CD8-positive, alpha-beta T cell (primary cell): ENCODE measurements at regions of chr19 and their contacts with region 1.

Region 1: GRCh38 chr19:15629003-15629880 is 11.5 kb upstream of the CYP4F3 start:
- DNase-seq: peak; percentile 81 to 98 (median 85)
- ATAC-seq: peak; percentile 93
- H3K4me3 ChIP-seq: no peak overlapping the region
- H3K4me3 Mint-ChIP-seq: no peak overlapping the region
- H3K27ac ChIP-seq: no peak overlapping the region
- H3K27ac Mint-ChIP-seq: no peak overlapping the region
- H3K4me1 ChIP-seq: peaks cover 5% of the 10 kb centered on the region
- H3K4me1 Mint-ChIP-seq: peaks cover 2% of the 10 kb centered on the region
- H3K27me3 ChIP-seq: no peaks in the 10 kb centered on the region
- H3K27me3 Mint-ChIP-seq: peaks cover 17% of the 10 kb centered on the region
- CTCF ChIP-seq: peak; percentile 91

Region 2: GRCh38 chr19:15869109-15869555 is 239.9 kb after region 1 on chr19:
- CTCF ChIA-PET with region 1: interaction called, 14 read pairs
- POLR2A ChIA-PET with region 1: interaction called, 4 read pairs
- intact Hi-C with region 1: loop called in 1 of 2 experiments (anchors 1 kb)
- DNase-seq: peak in 8 of 9 experiments; percentile 7 to 73 (median 44)
- ATAC-seq: peak; percentile 74
- H3K4me3 ChIP-seq: no peak overlapping the region
- H3K4me3 Mint-ChIP-seq: no peak overlapping the region
- H3K27ac ChIP-seq: no peak overlapping the region
- H3K27ac Mint-ChIP-seq: no peak overlapping the region
- H3K4me1 ChIP-seq: peaks cover 8% of the 10 kb centered on the region
- H3K4me1 Mint-ChIP-seq: peaks cover 22% of the 10 kb centered on the region
- H3K27me3 ChIP-seq: peaks cover 0 to 2% of the 10 kb centered on the region in 2 experiments
- H3K27me3 Mint-ChIP-seq: peaks cover 6% of the 10 kb centered on the region
- CTCF ChIP-seq: peak; percentile 60

Region 3: GRCh38 chr19:15971222-15971780 is 342.1 kb after region 1 on chr19:
- CTCF ChIA-PET with region 1: interaction called, 9 read pairs
- POLR2A ChIA-PET with region 1: no interaction called
- intact Hi-C with region 1: loop called in 1 of 2 experiments (anchors 1 kb)
- DNase-seq: no peak
- ATAC-seq: no peak
- H3K4me3 ChIP-seq: no peak overlapping the region
- H3K4me3 Mint-ChIP-seq: no peak overlapping the region
- H3K27ac ChIP-seq: no peak overlapping the region
- H3K27ac Mint-ChIP-seq: no peak overlapping the region
- H3K4me1 ChIP-seq: no peaks in the 10 kb centered on the region
- H3K4me1 Mint-ChIP-seq: no peaks in the 10 kb centered on the region
- H3K27me3 ChIP-seq: no peaks in the 10 kb centered on the region
- H3K27me3 Mint-ChIP-seq: peaks cover 20% of the 10 kb centered on the region
- CTCF ChIP-seq: no peak

Region 4: DNA sequence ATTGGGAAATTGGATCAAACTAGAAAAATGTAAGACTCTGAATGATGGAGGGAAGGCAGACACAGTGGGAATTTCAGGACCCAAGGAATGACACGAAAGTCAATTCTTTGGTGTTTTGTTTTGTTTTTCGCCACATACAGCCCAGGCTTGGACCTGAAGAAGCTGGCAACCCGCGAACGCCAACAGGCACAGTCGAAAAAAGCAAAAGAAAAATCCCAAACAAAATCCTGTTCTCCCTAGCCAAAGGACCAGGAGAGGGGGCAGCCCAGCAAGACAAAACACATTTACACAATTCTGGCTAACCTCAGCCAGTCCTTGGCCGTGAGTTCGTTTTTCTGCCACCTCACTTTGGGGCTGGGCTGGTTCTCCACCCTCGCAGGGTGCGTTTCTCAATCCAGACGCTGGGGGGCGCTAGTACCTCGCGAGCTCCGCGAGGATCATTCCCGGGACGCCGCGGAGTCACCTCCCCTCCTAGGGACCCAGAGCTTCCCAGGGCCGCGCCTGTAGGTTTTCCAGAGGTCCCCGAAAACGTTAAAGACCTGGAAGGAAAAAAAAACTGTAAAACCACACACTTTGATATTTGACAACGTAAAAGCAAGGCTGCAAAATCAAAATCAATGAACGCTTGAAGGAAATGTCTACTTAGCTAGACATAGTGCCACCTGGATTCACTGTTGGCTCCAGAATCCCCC is 412.2 kb after region 1 on chr19:
- CTCF ChIA-PET with region 1: interaction called, 4 read pairs
- POLR2A ChIA-PET with region 1: no interaction called
- intact Hi-C with region 1: loop called in 1 of 2 experiments (anchors 5 kb)
- DNase-seq: peak; percentile 50 to 86 (median 76)
- ATAC-seq: peak; percentile 91
- H3K4me3 ChIP-seq: no peak overlapping the region
- H3K4me3 Mint-ChIP-seq: peak overlapping the region; percentile 11
- H3K27ac ChIP-seq: no peak overlapping the region
- H3K27ac Mint-ChIP-seq: no peak overlapping the region
- H3K4me1 ChIP-seq: peaks cover 8% of the 10 kb centered on the region
- H3K4me1 Mint-ChIP-seq: peaks cover 16% of the 10 kb centered on the region
- H3K27me3 ChIP-seq: no peaks in the 10 kb centered on the region
- H3K27me3 Mint-ChIP-seq: no peaks in the 10 kb centered on the region
- CTCF ChIP-seq: peak; percentile 96

Region 5: DNA sequence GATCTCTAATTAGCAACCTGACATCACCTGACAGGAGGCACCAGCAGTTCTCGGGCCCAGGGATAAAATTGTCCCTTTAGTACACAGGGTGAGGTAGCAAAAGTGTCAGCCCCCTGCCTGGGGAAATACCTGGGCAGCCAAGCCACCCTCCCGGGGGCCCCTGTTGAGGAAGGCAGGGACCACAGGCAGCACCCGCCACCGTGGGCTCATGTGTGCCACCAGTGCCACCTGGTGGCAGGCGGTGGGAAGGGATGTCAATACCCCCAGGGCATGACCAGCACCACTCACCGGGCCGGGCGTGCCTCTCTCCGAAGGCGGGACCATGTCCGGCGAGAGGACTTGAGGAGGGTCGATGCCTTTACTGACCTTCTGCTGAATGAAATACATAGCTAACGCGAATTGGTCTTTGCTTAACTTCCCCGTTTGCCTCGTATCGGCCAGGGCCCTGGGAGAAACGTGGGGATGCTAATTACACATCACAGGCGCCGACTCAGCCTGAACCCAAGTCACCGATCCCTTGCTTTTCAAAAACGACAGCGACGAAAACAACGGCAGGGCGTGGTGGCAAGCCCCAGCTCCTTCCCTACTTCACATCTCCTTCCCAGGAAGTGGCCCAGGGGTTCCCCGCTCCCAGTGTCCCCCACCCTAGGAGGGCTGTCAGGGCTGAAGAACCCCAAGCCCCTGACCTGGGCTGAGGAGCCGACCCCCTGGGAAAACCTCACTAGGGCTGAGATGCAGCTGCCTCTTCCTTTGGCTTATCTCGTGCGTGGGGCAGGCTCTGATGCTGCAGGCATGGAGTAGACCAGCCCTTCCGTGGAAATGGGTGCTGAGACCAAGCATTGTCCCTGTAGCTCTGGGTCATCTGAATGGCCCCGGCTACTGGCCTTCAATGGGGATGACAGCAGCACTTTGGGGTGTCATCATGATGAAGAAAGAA is 788.7 kb after region 1 on chr19:
- CTCF ChIA-PET with region 1: no interaction called
- POLR2A ChIA-PET with region 1: no interaction called
- intact Hi-C with region 1: loop called in 1 of 2 experiments (anchors 1 kb)
- DNase-seq: peak; percentile 54 to 84 (median 70)
- ATAC-seq: peak; percentile 99
- H3K4me3 ChIP-seq: no peak overlapping the region
- H3K4me3 Mint-ChIP-seq: no peak overlapping the region
- H3K27ac ChIP-seq: no peak overlapping the region
- H3K27ac Mint-ChIP-seq: peak overlapping the region; percentile 32
- H3K4me1 ChIP-seq: peaks cover 6% of the 10 kb centered on the region
- H3K4me1 Mint-ChIP-seq: peaks cover 9% of the 10 kb centered on the region
- H3K27me3 ChIP-seq: no peaks in the 10 kb centered on the region
- H3K27me3 Mint-ChIP-seq: no peaks in the 10 kb centered on the region
- CTCF ChIP-seq: peak; percentile 74